ENCODE measurements at regions of chr22 and their contacts with region 1.

Region 1: DNA sequence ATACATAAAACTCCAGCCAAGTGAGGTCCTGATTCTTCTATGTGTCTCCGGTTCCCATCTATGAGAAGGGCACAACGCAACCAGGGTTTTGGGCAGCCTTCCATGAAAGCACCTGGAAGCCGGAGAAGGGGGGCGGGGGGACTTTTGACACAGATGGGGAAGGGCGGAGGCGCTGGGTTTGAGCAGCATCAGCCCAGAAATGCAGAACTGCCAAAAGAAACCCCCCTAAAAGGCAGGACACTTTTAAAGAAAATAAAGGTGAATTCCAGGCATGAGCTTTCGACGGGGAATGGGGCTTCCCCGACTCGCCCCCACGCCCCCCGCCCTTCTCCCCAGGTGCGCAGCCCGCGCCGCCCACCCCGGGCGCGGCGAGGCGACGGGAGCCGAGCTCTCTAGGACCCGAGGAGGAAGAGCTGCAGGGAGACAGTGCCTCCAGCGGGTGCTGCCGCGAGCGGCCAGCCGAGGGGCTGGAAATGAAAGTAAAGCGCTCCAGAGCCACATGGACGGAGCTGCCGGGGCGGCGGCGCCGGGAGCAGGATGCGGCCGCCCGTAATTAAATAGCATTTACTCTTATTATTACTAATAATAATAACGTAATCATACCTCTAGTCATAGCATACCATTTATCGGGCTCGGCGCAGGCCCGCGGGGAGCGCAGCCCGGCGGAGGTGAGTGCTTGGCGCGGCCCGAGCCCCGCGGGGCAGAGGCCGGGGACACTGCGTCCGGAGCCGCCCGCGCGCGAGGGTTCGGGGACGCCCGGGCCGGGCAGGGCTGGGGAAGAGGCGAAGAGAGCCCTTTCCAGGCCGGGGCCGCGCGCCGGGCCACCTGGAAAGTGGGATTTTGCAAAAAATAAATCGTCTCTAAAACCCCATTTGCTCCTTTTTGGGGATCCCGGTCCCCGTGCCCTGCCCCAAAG is at the start of gene ZC3H7B:
- DNase-seq: peak; percentile 81
- H3K4me3 ChIP-seq: peak within 1 kb of the TSS; percentile 89 to 95
- H3K27ac ChIP-seq: peak within 1 kb of the TSS; percentile 63 to 90
- H3K4me1 ChIP-seq: peaks cover 5% of the 10 kb centered on the region
- H3K27me3 ChIP-seq: no peaks in the 10 kb centered on the region
- CTCF ChIP-seq: peak; percentile 20 to 58 (median 38)
- POLR2A ChIP-seq: peak; percentile 67
- total RNA-seq, gene ZC3H7B: 56.7 to 79.1 TPM

Region 2: GRCh38 chr22:41367039-41367679 is 65.8 kb after region 1 on chr22:
- intact Hi-C with region 1: loop called (anchors 5 kb)
- DNase-seq: peak; percentile 94
- H3K4me3 ChIP-seq: peak overlapping the region; percentile 26 to 30
- H3K27ac ChIP-seq: peak overlapping the region; percentile 67 to 69
- H3K4me1 ChIP-seq: peaks cover 11% of the 10 kb centered on the region
- H3K27me3 ChIP-seq: no peaks in the 10 kb centered on the region
- CTCF ChIP-seq: peak in 1 of 4 experiments; percentile 39
- POLR2A ChIP-seq: peak; percentile 44

Region 3: DNA sequence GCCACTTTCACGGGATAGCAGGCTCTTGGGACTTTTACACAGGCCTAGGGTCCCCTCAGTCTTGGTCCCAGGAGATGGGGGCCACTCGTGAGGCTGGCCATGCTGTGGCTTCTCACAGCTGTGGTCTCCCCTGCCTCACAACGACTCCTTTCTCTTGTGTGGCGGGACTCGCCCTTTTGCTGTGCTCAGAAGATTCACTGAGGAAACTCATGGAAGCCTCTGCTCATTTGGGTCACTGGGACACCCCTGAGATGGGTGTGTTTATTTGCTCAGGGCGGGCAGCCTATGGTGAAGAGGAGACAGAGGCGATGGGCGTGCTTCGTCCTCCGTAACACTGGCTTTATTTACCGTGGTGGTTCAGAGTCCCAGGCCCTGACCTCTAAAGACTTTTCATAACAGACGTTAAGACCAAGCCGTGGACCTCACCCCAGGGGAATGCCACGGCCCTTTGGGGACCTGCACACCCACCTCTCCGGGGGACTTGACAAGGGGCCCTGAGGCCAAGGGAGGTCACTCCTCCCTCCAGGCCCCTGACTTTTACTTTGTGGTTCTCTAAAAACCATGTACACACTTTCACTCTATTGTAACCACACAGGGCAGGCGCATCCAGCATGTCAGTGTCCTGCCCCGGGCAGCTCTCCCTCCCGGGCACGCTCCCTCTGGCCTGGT is 95.9 kb after region 1 on chr22:
- intact Hi-C with region 1: no loop called
- DNase-seq: no peak
- H3K4me3 ChIP-seq: no peak overlapping the region
- H3K27ac ChIP-seq: peak overlapping the region in 1 of 2 donors; percentile 8
- H3K4me1 ChIP-seq: peaks cover 4% of the 10 kb centered on the region
- H3K27me3 ChIP-seq: no peaks in the 10 kb centered on the region
- CTCF ChIP-seq: no peak
- POLR2A ChIP-seq: no peak

Region 4: GRCh38 chr22:41526837-41527799 is 225.8 kb after region 1 on chr22:
- intact Hi-C with region 1: loop called (anchors 10 kb)
- DNase-seq: no peak
- H3K4me3 ChIP-seq: no peak overlapping the region
- H3K27ac ChIP-seq: peak overlapping the region; percentile 49 to 70
- H3K4me1 ChIP-seq: peaks cover 5% of the 10 kb centered on the region
- H3K27me3 ChIP-seq: no peaks in the 10 kb centered on the region
- CTCF ChIP-seq: peak; percentile 56 to 77 (median 72)
- POLR2A ChIP-seq: no peak

Measured in prostate gland (tissue), 2 donors.